HepG2 (cell line): ENCODE measurements at regions of chr1 and their contacts with region 1.

Region 1: DNA sequence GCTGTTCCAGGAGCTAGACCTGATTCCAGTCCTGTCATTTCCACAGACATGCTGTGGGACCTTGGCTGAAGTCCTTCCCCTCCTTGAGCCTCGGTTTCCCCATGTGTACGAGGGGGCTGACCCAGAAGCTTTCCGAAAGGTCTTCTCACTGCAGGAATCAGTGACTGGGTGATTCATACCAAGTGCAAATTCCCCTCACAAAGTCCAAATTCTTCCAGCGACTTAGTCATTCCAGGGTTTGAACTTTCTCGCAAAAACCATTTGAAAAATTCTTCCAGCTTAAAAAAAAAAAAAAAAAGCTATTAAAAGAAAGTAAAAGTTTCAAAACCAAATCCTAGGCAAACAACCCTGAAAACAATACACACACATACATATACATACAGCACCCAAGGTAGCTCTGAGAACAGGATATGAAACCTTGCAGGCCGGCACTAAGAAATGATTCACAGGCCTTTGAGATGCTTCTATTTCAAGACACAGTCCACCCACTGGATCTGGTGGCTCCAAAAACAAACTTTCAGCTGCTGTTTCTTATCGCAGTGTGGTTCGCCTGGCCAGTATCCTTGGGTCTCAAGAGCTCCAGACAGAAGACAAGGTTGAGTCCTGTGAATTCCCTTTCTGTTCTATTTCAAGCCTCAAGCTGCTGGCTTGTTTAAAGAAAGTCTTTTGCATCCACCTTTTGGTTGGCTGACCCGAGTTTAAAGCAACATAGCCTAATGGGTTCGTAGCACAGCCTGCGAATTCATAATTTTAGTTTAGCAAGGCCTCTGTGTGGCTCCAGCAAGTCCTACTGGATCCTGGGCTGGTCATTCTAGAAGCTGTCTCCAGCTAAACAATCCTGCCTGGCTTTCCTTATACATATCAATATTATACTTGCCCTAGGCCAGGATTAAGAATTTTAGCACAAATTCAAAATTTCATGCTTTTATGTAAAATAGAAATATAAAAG is 18.0 kb upstream of the ID3 start:
- DNase-seq: peak; percentile 79
- ATAC-seq: peak; percentile 57
- H3K4me3 ChIP-seq: peak overlapping the region in 1 of 3 experiments; percentile 35; a peak in 1 of 6 replicates
- H3K27ac ChIP-seq: peak overlapping the region; percentile 11
- H3K4me1 ChIP-seq: peaks cover 67% of the 10 kb centered on the region
- H3K27me3 ChIP-seq: peaks cover 0 to 17% of the 10 kb centered on the region in 2 experiments; a peak in 1 of 5 replicates
- CTCF ChIP-seq: no peak
- EP300 ChIP-seq: no peak; a peak in 1 of 4 replicates
- POLR2A ChIP-seq: no peak
- RAD21 ChIP-seq: no peak

Region 2: GRCh38 chr1:23591460-23592208 is 14.3 kb after region 1 on chr1:
- CTCF ChIA-PET with region 1: no interaction called
- POLR2A ChIA-PET with region 1: interaction called, 12 read pairs
- in situ Hi-C with region 1: no loop called
- intact Hi-C with region 1: no loop called
- DNase-seq: peak; percentile 85
- ATAC-seq: peak; percentile 81
- H3K4me3 ChIP-seq: peak overlapping the region; percentile 1 to 63 (median 30); a peak in 4 of 6 replicates
- H3K27ac ChIP-seq: peak overlapping the region; percentile 53
- H3K4me1 ChIP-seq: peaks cover 98% of the 10 kb centered on the region
- H3K27me3 ChIP-seq: 0 out of 5 replicates have a peak, but pooled peaks cover 0 to 2% of the 10 kb centered on the region in 2 experiments
- CTCF ChIP-seq: no peak
- EP300 ChIP-seq: 0 out of 4 replicates have a peak, but pooled peaks of 1 of the 2 experiments have one; percentile 52
- POLR2A ChIP-seq: no peak
- RAD21 ChIP-seq: no peak

Region 3: DNA sequence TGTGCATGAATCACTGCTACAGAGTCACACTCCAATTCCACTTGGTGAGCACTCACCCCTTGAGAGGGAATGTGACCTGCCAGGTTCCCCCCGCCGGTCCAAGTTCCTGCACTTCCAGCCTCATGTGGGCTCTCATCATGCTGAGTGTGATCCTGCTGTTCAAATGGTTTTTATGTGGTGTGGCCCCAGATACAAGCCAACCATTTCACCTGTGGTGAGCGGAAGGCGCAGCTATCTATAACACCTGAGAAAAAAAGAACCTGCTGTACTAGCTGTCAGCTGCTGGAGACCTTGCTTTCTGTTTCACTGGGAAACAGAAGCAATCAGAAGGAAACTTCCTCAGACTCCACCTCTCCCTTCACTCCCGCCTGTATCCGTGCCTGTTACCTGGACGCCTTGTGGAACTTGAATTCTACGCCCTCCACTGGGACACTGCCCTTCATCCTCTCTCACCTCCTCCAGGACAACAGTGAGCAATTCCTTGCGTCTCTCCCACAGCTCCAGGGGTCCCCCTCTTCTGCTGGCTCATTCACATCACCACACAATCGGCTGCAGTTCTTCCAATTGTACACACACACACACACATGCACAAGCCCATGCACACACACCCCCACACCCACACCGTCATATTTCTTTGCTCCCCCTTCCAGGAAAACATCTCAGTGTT is 49.9 kb after region 1 on chr1:
- CTCF ChIA-PET with region 1: no interaction called
- POLR2A ChIA-PET with region 1: no interaction called
- in situ Hi-C with region 1: no loop called
- intact Hi-C with region 1: loop called (anchors 5 kb)
- DNase-seq: no peak
- ATAC-seq: no peak
- H3K4me3 ChIP-seq: no peak overlapping the region
- H3K27ac ChIP-seq: no peak overlapping the region
- H3K4me1 ChIP-seq: peaks cover 19% of the 10 kb centered on the region
- H3K27me3 ChIP-seq: no peaks in the 10 kb centered on the region; a peak in 2 of 5 replicates
- CTCF ChIP-seq: no peak
- EP300 ChIP-seq: no peak
- POLR2A ChIP-seq: no peak
- RAD21 ChIP-seq: no peak